Heart left ventricle (tissue), 16 donors: ENCODE measurements at regions of chr11 and their contacts with region 1.

Region 1: GRCh38 chr11:94988748-94989147 is 15.2 kb downstream of the KDM4D start:
- DNase-seq: no peak
- ATAC-seq: no peak
- H3K4me3 ChIP-seq: no peak overlapping the region
- H3K27ac ChIP-seq: no peak overlapping the region
- H3K4me1 ChIP-seq: no peaks in the 10 kb centered on the region
- H3K27me3 ChIP-seq: no peaks in the 10 kb centered on the region
- CTCF ChIP-seq: no peak
- POLR2A ChIP-seq: no peak

Region 2: GRCh38 chr11:95751515-95751914 is 762.8 kb after region 1 on chr11:
- intact Hi-C with region 1: loop called in 1 of 10 experiments (anchors 10 kb)
- DNase-seq: no peak
- ATAC-seq: no peak
- H3K4me3 ChIP-seq: no peak overlapping the region
- H3K27ac ChIP-seq: no peak overlapping the region
- H3K4me1 ChIP-seq: no peaks in the 10 kb centered on the region
- H3K27me3 ChIP-seq: peaks cover 0 to 3% (median 0%) of the 10 kb centered on the region in 9 donors
- CTCF ChIP-seq: no peak
- POLR2A ChIP-seq: no peak